ENCODE measurements at regions of chr14 and their contacts with region 1.

Region 1: DNA sequence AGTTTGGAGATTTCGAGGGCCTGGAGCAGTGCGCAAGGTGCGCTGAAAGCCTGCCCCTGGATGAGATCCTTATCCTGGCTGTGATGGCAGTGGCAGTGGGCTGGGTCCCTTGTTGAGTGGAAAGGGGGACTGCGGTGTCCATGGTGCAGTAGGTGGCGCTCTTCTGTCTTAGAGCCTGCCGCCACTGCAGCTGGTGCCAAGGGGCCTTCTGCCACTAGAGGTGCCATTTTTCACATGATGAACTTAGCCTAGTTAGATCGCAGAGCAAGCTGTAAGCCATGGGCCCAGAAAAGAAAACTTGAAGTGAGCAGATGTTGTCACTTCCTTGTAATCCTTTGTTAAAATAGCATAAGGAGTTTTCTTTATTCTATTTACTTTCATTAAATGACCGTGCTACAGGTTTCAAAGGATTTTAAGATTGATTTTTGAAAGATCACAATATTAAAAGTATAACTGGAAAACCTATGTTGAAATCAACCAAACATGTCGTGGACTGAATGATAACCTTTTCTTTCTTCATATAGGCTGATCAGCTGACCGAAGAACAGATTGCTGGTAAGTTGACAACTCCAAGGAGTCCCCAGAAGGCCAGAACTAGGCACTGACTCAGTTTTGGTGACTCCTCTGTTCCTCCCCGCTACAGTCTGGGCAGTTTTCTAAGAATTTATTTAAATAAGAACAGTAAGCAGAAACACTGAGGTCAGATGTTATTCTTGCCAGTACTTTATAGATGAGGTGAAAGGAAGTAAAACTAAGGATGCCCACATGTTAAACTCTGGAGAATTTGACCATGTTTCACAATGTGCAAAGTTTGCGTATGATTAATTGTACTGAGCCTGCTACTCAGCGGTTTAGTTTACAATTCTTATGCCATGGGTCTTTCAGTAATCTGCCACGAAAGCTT is 3.0 kb downstream of the CALM1 start:
- DNase-seq: peak; percentile 95
- H3K4me3 ChIP-seq: peak overlapping the region in 1 of 3 experiments; percentile 78
- H3K27ac ChIP-seq: peak overlapping the region; percentile 33
- H3K4me1 ChIP-seq: peaks cover 35% of the 10 kb centered on the region
- H3K27me3 ChIP-seq: no peaks in the 10 kb centered on the region
- CTCF ChIP-seq: peak; percentile 100
- POLR2A ChIP-seq: no peak

Region 2: DNA sequence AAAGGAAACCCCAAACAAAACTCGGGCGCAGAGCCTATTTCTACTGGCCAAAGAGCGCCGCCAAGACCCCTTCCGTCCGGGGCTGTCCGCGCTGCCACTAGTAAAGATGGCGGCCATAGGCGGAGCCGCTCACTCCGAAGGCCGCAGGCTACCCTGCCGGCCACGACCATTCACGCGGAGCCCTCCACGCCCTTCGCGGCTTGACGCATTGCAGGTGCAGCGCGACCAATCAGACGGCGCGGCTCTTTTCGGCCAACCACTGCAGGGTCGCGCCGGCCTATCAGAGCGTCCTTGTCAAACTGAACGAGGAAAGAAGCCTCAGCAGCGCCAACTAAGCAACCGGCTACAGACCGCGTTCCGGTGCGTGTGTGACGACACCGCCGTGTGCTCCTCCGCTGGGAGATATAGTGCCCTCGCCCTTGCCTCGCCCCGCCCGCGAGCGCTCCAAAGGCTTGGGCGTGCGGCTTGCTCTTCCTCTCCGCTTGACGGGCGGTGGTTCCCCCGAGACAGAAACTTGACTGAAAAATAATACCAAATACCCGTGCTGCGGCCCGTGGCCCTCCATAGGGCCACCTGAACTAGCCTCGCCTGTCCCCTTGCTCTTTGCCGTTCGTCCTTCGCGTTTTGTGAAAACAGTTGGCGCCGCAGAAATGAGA is 16.6 kb before region 1 on chr14:
- CTCF ChIA-PET with region 1: interaction called, 13 read pairs
- POLR2A ChIA-PET with region 1: interaction called, 49 read pairs
- dilution Hi-C with region 1: no loop called
- intact Hi-C with region 1: loop called (anchors 1 kb)
- DNase-seq: peak; percentile 100
- H3K4me3 ChIP-seq: peak overlapping the region; percentile 47 to 70 (median 58)
- H3K27ac ChIP-seq: peak overlapping the region; percentile 97
- H3K4me1 ChIP-seq: peaks cover 17% of the 10 kb centered on the region
- H3K27me3 ChIP-seq: peaks cover 0 to 2% of the 10 kb centered on the region in 2 experiments
- CTCF ChIP-seq: no peak
- POLR2A ChIP-seq: peak; percentile 77

Region 3: GRCh38 chr14:90426663-90427062 is 26.9 kb after region 1 on chr14:
- CTCF ChIA-PET with region 1: interaction called, 10 read pairs
- POLR2A ChIA-PET with region 1: no interaction called
- dilution Hi-C with region 1: no loop called
- intact Hi-C with region 1: no loop called
- DNase-seq: peak; percentile 69
- H3K4me3 ChIP-seq: no peak overlapping the region
- H3K27ac ChIP-seq: no peak overlapping the region
- H3K4me1 ChIP-seq: peaks cover 21% of the 10 kb centered on the region
- H3K27me3 ChIP-seq: no peaks in the 10 kb centered on the region
- CTCF ChIP-seq: no peak
- POLR2A ChIP-seq: no peak

Region 4: DNA sequence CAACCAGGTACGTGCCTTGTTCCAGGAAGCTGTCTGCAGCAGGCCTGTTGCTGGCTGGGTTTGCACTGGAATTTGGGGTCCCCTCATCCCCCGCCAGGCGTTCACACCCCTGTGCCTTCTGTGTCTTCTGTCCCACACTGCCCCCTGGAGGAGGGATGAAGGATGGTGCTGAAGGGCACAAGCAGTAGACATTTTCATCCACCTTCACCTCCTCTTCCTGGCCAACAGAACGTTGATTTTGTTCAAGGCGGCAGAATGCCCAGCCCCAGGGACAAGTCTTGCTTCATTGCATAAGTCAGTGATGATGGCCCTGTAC is 119.1 kb after region 1 on chr14:
- CTCF ChIA-PET with region 1: interaction called, 32 read pairs
- POLR2A ChIA-PET with region 1: interaction called, 7 read pairs
- dilution Hi-C with region 1: no loop called
- intact Hi-C with region 1: loop called (anchors 1 kb)
- DNase-seq: peak; percentile 44
- H3K4me3 ChIP-seq: no peak overlapping the region
- H3K27ac ChIP-seq: no peak overlapping the region
- H3K4me1 ChIP-seq: no peaks in the 10 kb centered on the region
- H3K27me3 ChIP-seq: no peaks in the 10 kb centered on the region
- CTCF ChIP-seq: peak; percentile 58 to 75
- POLR2A ChIP-seq: no peak

Region 5: GRCh38 chr14:90697577-90698206 is 297.9 kb after region 1 on chr14:
- CTCF ChIA-PET with region 1: interaction called, 63 read pairs
- POLR2A ChIA-PET with region 1: interaction called, 5 read pairs
- dilution Hi-C with region 1: no loop called
- intact Hi-C with region 1: loop called (anchors 1 kb)
- DNase-seq: peak; percentile 76
- H3K4me3 ChIP-seq: no peak overlapping the region
- H3K27ac ChIP-seq: no peak overlapping the region
- H3K4me1 ChIP-seq: peaks cover 18% of the 10 kb centered on the region
- H3K27me3 ChIP-seq: no peaks in the 10 kb centered on the region
- CTCF ChIP-seq: peak; percentile 92
- POLR2A ChIP-seq: no peak

Region 6: GRCh38 chr14:91205459-91205858 is 805.7 kb after region 1 on chr14:
- CTCF ChIA-PET with region 1: no interaction called
- POLR2A ChIA-PET with region 1: no interaction called
- dilution Hi-C with region 1: no loop called
- intact Hi-C with region 1: no loop called
- DNase-seq: peak; percentile 32
- H3K4me3 ChIP-seq: no peak overlapping the region
- H3K27ac ChIP-seq: no peak overlapping the region
- H3K4me1 ChIP-seq: peaks cover 12% of the 10 kb centered on the region
- H3K27me3 ChIP-seq: no peaks in the 10 kb centered on the region
- CTCF ChIP-seq: no peak
- POLR2A ChIP-seq: no peak